H1 (cell line): ENCODE measurements at regions of chr15 and their contacts with region 1.

Region 1: DNA sequence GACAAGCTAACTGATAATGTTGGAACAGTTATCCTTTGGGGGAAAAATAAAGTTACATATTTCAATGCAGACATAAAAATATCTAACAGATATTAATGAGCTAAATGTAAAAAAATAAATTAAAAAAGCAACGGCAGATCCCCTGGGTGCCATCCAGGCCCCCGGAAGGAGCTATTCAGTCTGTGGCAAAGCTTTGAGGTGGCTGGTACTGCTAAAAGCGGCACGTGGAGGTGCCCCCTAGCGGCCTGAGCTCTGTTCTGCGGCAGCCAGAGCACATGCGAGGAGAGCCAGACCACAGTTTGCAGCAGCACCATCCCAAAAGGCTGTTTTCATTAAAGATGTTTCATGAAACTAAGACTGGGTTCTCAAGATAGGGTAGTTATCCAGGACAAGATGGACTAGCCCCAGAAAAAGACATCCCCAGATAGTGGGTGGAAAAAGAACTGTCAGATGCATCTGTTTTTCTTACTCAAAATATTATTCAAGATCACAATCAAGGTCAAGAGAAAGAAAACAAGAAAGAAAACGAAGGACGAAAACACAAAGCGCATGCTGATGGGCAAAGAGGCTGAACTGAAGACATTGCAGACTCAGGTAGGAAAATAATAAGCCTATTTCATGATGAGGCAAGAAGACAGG is 18.7 kb downstream of the AP3S2 start:
- DNase-seq: peak; percentile 43 to 88
- H3K4me3 ChIP-seq: no peak overlapping the region
- H3K27ac ChIP-seq: no peak overlapping the region
- H3K4me1 ChIP-seq: no peaks in the 10 kb centered on the region
- H3K27me3 ChIP-seq: no peaks in the 10 kb centered on the region
- CTCF ChIP-seq: peak; percentile 94 to 96 (median 95)
- EP300 ChIP-seq: no peak
- POLR2A ChIP-seq: no peak
- RAD21 ChIP-seq: peak; percentile 77 to 87

Region 2: DNA sequence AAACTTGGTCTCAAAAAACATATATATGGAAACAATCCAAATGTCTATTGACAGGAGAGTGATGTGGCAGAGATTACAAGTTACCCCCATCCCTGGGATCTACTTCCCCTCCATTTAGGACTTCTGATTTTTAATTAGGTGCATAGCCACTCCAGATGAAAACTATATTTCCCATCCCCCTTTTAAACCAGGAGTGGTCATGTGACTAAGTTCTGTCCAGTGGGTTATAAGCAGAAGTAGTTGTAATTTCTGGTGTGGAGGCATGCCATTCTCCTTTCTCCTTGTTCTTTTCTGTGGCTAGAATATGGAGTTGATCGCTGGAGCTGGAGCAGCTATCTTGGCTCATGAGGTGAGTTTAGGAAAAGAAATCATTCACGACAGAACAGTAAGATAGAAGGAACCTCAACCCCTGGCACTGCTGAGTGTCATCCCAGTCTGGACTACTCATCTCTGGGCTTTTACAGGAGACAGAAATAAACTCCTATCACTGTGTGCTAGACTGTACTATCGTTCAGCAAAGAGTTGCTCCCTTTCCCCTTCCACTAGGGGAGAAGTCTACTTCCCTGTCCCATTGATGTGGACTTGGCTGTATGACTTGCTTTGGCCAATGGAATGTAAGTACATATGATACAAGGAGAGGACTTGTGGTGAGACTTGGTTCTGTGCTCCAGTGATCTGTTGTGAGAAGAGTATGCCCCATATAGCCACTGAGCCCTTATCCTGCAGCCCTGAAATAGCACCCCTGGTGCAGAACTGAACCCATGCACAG is 214.7 kb before region 1 on chr15:
- CTCF ChIA-PET with region 1: no interaction called
- POLR2A ChIA-PET with region 1: no interaction called
- DNase-seq: no peak
- H3K4me3 ChIP-seq: no peak overlapping the region
- H3K27ac ChIP-seq: no peak overlapping the region
- H3K4me1 ChIP-seq: peaks cover 0 to 3% (median 0%) of the 10 kb centered on the region in 4 experiments; a peak in 1 of 7 replicates
- H3K27me3 ChIP-seq: peaks cover 0 to 12% (median 9%) of the 10 kb centered on the region in 4 experiments; a peak in 5 of 7 replicates
- CTCF ChIP-seq: no peak
- EP300 ChIP-seq: no peak
- POLR2A ChIP-seq: no peak
- RAD21 ChIP-seq: no peak

Region 3: GRCh38 chr15:89740137-89740536 is 134.9 kb before region 1 on chr15:
- CTCF ChIA-PET with region 1: interaction called, 16 read pairs
- POLR2A ChIA-PET with region 1: no interaction called
- DNase-seq: peak; percentile 62 to 73
- H3K4me3 ChIP-seq: no peak overlapping the region
- H3K27ac ChIP-seq: no peak overlapping the region
- H3K4me1 ChIP-seq: no peaks in the 10 kb centered on the region
- H3K27me3 ChIP-seq: peaks cover 0 to 2% (median under 1%) of the 10 kb centered on the region in 4 experiments; a peak in 5 of 7 replicates
- CTCF ChIP-seq: peak; percentile 29 to 92 (median 83)
- EP300 ChIP-seq: no peak
- POLR2A ChIP-seq: no peak
- RAD21 ChIP-seq: peak; percentile 92 to 95

Region 4: DNA sequence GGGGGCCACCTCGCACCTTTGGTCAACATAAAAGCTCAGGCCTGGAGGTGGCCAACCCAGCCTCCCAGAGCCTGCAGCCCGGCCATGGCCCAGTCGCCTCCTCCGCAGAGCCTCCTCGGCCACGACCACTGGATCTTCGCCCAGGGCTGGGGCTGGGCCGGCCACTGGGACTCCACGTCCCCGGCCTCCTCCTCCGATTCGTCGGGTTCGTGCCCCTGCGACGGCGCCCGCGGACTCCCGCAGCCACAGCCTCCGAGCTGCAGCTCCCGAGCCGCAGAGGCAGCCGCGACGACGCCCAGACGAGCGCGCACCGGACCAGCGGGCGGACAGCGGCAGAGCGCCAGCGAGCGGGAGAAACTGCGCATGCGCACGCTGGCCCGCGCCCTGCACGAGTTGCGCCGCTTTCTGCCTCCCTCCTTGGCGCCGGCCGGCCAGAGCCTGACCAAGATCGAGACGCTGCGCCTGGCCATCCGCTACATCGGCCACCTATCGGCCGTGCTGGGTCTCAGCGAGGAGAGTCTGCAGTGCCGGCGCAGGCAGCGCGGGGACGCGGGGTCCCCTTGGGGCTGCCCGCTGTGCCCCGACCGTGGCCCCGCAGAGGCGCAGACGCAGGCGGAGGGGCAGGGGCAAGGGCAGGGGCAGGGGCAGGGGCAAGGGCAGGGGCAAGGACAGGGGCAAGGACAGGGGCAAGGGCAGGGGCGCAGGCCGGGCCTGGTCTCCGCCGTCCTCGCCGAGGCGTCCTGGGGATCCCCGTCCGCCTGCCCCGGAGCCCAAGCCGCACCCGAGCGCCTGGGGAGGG is 98.6 kb before region 1 on chr15 and contains the start of gene MESP2:
- CTCF ChIA-PET with region 1: interaction called, 10 read pairs
- POLR2A ChIA-PET with region 1: no interaction called
- DNase-seq: peak; percentile 75 to 90
- H3K4me3 ChIP-seq: peak within 1 kb of the TSS; percentile 3 to 56 (median 30); a peak in 7 of 8 replicates
- H3K27ac ChIP-seq: no peak within 1 kb of the TSS
- H3K4me1 ChIP-seq: peaks cover 0 to 4% (median 1%) of the 10 kb centered on the region in 4 experiments; a peak in 2 of 7 replicates
- H3K27me3 ChIP-seq: peaks cover 13 to 31% (median 27%) of the 10 kb centered on the region in 4 experiments
- CTCF ChIP-seq: peak; percentile 67 to 78 (median 71)
- EP300 ChIP-seq: no peak
- POLR2A ChIP-seq: no peak
- RAD21 ChIP-seq: peak; percentile 41 to 55; a peak in 3 of 4 replicates
- total RNA-seq, gene MESP2: 0.35 and 0.38 TPM in 2 replicates

Region 5: DNA sequence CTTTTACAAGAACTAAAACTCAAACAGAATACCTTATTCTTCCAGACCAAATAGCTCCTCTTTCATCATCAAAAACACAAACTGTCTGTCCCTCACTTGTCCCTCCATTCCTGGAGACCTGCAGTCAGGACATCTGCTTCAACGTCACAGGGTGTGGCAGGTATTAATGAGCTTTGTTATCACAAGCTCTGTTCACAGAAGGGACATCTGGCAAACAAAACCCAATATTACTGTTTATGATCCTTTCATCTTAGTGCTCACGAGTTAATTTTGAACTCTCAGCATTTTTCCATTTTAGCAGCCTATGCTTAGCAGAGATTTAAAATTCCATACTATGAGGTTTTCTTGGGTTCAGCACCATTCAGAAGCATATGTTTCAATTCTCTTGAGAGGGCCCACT is 14.2 kb before region 1 on chr15:
- CTCF ChIA-PET with region 1: interaction called, 24 read pairs
- POLR2A ChIA-PET with region 1: interaction called, 3 read pairs
- DNase-seq: no peak
- H3K4me3 ChIP-seq: no peak overlapping the region
- H3K27ac ChIP-seq: no peak overlapping the region
- H3K4me1 ChIP-seq: no peaks in the 10 kb centered on the region
- H3K27me3 ChIP-seq: no peaks in the 10 kb centered on the region
- CTCF ChIP-seq: no peak
- EP300 ChIP-seq: no peak
- POLR2A ChIP-seq: no peak
- RAD21 ChIP-seq: no peak

Region 6: GRCh38 chr15:89928428-89929197 is 53.6 kb after region 1 on chr15:
- CTCF ChIA-PET with region 1: no interaction called
- POLR2A ChIA-PET with region 1: no interaction called
- DNase-seq: no peak
- H3K4me3 ChIP-seq: no peak overlapping the region
- H3K27ac ChIP-seq: no peak overlapping the region
- H3K4me1 ChIP-seq: no peaks in the 10 kb centered on the region
- H3K27me3 ChIP-seq: no peaks in the 10 kb centered on the region
- CTCF ChIP-seq: no peak
- EP300 ChIP-seq: no peak
- POLR2A ChIP-seq: no peak
- RAD21 ChIP-seq: no peak

Region 7: DNA sequence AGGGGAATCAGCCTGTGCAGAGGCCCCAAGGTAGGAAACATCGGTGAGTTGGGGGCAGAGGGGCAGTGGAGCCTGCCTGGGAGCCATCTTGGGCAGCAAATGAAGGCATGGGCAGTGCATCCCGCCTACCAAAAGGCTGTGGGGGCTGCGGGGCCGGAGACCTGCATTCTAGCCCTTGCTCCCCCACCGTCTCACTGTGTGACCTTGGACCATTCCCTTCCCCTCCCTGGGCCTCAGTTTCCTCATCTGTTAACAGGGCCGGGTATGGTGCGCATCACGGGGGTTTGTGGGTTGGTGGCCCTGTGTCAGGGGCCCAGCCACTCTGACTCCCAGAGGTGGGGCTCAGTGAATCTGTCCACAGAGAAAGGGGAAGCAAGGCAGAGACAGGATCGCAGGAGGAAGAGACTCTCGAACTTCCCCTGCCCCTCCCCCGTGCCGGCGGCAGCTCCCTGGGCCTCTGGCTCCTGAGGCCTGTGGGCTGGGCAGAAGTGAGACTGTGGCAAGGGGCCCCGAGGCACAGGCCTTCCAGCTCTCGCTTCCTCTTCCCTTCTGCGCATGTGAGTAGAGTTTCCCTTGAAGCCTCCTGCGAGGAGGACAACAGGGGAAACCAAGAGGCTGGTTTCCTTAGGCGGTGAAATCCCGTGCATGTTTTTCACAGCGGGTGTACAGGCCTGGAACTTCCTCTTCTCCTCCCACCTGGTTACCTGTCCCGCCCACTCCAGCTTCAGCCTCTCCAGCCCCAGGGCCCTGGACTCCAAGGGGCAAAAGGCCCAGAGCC is 184.4 kb after region 1 on chr15:
- CTCF ChIA-PET with region 1: no interaction called
- POLR2A ChIA-PET with region 1: no interaction called
- DNase-seq: peak in 1 of 2 experiments; percentile 64
- H3K4me3 ChIP-seq: peak overlapping the region in 1 of 4 experiments; percentile 19; a peak in 1 of 8 replicates
- H3K27ac ChIP-seq: peak overlapping the region; percentile 69
- H3K4me1 ChIP-seq: peaks cover 8 to 50% (median 36%) of the 10 kb centered on the region in 4 experiments
- H3K27me3 ChIP-seq: no peaks in the 10 kb centered on the region
- CTCF ChIP-seq: no peak
- EP300 ChIP-seq: no peak; a peak in 1 of 3 replicates
- POLR2A ChIP-seq: peak in 1 of 2 experiments; percentile 30; a peak in 1 of 3 replicates
- RAD21 ChIP-seq: peak in 1 of 2 experiments; percentile 8; a peak in 1 of 4 replicates